ENCODE measurements at regions of chr1 and their contacts with region 1.

Region 1: GRCh38 chr1:57450981-57451380 is 27.1 kb upstream of the DAB1 start:
- DNase-seq: no peak
- H3K4me3 ChIP-seq: no peak overlapping the region
- H3K27ac ChIP-seq: no peak overlapping the region
- H3K4me1 ChIP-seq: no peaks in the 10 kb centered on the region
- H3K27me3 ChIP-seq: no peaks in the 10 kb centered on the region
- CTCF ChIP-seq: no peak
- POLR2A ChIP-seq: no peak

Region 2: GRCh38 chr1:57406428-57406970 is 44.5 kb before region 1 on chr1:
- CTCF ChIA-PET with region 1: no interaction called
- POLR2A ChIA-PET with region 1: interaction called, 10 read pairs
- dilution Hi-C with region 1: no loop called
- intact Hi-C with region 1: no loop called
- DNase-seq: no peak
- H3K4me3 ChIP-seq: no peak overlapping the region
- H3K27ac ChIP-seq: no peak overlapping the region
- H3K4me1 ChIP-seq: no peaks in the 10 kb centered on the region
- H3K27me3 ChIP-seq: no peaks in the 10 kb centered on the region
- CTCF ChIP-seq: no peak
- POLR2A ChIP-seq: no peak

Measured in endothelial cell of umbilical vein (primary cell).